BJ (cell line): ENCODE measurements at regions of chr2 and their contacts with region 1.

Region 1: DNA sequence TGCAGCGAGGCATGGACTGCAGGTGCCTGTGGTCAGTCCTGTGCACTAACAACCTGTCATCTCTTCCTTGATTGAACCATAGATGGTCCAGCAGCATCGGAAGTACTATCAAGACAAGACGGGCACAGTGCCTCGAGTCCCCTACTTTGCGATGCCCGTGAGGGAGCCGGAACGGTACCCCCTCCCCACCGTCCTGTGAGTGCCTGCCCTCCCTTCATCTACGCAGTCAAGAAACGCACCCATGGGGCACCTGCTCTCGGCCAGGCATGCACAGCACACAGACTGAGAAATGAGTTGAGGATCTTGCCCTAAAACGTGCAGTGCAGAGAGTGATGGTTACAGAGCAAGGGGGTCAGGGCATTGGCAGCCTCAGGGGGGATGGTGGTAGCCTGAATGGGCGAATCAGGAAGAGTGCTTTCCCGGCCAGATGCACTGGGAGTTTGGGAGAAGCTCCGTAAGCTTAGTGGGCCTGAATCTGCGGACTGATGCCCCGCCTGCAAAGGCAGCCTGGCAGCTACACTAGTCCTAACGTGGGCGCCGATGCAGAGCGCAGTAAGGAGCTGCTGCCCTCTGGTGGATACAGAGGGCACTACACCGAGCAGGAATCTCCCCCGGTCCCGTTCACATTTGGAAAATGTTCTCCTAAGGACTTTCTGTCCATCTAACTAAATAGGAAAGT is 63.6 kb downstream of the CIB4 start:
- DNase-seq: no peak
- H3K4me3 ChIP-seq: no peak overlapping the region
- H3K27me3 ChIP-seq: peaks cover 23% of the 10 kb centered on the region
- CTCF ChIP-seq: peak; percentile 98

Region 2: DNA sequence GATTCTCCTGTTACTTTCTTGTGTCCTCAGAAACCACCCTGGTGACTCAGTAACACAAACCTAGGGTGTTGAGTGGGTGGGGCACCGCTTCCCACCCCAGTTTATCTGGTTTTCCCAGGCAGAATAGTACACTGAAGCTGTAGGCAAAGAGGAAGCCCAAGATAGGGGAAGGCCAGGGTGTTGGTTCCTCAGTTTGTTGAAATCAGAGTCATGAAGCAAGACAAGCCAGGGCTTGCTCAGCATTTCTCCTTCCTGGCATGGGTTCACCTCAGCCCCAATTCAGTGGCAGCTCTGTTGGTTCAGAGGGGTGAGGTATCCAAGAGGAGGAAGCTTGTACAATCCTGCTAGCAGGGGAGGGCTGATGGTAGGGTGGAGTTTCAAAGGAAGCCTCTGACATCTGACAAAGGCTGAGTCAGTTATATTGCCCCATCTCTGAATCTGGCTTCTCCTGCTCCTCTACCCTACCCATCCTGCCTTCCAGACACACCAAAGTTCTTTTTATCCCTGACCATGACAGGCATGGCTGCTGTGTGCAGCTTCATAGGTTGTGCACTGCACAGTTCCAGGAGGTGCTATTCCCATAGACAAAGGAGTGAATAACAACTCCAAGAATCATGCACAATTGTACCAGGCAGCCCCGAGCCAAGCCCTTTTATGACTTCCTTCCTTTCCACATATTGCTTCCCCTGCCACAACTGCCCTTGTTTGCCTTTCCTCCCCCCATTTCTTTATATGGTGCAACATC is 568.6 kb before region 1 on chr2:
- CTCF ChIA-PET with region 1: no interaction called
- POLR2A ChIA-PET with region 1: no interaction called
- DNase-seq: no peak
- H3K4me3 ChIP-seq: no peak overlapping the region
- H3K27me3 ChIP-seq: no peaks in the 10 kb centered on the region
- CTCF ChIP-seq: no peak

Region 3: DNA sequence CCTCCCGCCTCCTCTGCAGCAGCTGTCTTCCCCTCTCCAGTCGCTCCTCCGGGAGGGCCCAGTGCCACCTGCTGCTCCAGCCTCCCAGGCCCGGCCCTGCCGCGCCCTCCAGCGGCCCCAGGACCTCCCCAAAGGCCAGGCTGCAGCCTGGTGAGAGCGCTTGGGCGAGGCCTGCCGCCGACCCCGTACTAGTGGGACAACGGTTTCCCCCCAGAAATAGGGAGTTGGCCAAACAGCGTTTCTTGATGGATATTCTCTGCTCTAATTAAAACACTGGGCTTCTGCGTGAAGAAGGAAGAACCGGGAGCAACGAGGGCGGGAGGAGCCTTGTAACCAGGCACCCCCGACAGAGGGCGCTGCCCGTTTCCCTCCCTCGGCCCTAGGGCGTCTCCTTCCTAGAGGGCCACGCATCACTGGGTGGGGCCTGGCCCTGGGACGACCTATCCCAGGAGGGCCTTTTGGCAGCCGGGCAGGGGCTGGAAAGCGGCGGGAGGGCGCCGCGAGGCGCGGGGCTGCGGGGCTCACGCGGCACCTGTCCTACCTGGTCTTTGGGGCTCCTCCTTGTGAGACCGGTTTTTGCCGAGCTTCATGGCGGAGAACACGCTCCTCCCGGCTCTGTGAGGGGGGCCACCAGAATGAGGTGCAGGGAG is 74.2 kb before region 1 on chr2:
- CTCF ChIA-PET with region 1: interaction called, 14 read pairs
- POLR2A ChIA-PET with region 1: no interaction called
- DNase-seq: no peak
- H3K4me3 ChIP-seq: peak overlapping the region; percentile 29
- H3K27me3 ChIP-seq: peaks cover 24% of the 10 kb centered on the region
- CTCF ChIP-seq: peak; percentile 90

Region 4: DNA sequence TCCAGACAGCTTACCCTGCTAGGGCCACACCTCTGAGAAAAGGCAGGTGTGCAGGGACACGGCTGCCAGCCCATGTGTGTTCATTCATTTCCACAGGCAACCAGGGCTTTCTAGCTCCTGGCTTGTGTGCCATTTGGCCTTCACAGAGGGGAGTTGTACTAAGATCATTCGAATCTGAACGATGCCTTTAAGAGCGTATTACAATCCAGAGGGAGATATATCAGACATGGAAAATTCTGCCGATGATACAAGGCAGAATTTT is 35.4 kb before region 1 on chr2:
- CTCF ChIA-PET with region 1: interaction called, 12 read pairs
- POLR2A ChIA-PET with region 1: no interaction called
- DNase-seq: no peak
- H3K4me3 ChIP-seq: no peak overlapping the region
- H3K27me3 ChIP-seq: peaks cover 11% of the 10 kb centered on the region
- CTCF ChIP-seq: no peak

Region 5: GRCh38 chr2:26555246-26556133 is 22.1 kb before region 1 on chr2:
- CTCF ChIA-PET with region 1: interaction called, 15 read pairs
- POLR2A ChIA-PET with region 1: no interaction called
- DNase-seq: no peak
- H3K4me3 ChIP-seq: no peak overlapping the region
- H3K27me3 ChIP-seq: peaks cover 37% of the 10 kb centered on the region
- CTCF ChIP-seq: no peak

Region 6: GRCh38 chr2:26591619-26592505 is 14.3 kb after region 1 on chr2:
- CTCF ChIA-PET with region 1: interaction called, 76 read pairs
- POLR2A ChIA-PET with region 1: no interaction called
- DNase-seq: no peak
- H3K4me3 ChIP-seq: no peak overlapping the region
- H3K27me3 ChIP-seq: peaks cover 29% of the 10 kb centered on the region
- CTCF ChIP-seq: no peak

Region 7: DNA sequence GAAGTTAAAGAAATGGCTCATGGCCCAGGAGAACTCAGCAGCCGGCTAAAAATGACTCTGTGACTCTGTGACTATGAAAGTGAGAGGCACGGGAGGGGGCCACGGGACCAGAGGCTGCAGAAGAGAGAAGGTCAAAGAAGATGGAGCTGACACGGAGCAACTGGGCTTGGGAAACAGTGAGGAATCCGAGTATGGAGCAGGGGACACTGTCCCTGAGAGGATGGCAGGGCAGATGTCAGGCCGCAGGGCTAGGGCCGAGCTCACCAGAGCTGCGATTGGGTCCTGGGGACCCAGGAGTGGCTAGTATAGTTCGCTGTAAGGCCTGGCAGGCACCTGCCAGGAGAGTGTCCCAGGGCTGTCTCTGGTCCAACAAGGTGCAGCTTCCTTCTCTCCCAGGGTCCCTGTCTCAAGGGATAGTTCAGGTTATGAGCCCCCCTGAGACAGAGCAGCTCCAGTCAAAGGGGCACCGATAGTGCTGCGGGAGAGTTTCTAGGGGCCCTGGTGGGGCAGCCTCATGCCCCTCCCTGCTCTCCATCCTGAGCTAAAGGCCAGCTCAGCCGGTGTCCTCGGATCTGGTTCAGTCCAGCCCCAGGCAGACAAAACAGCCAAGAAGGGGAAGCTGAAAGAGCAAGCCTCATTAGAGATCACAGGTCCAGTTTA is 20.9 kb after region 1 on chr2:
- CTCF ChIA-PET with region 1: interaction called, 76 read pairs
- POLR2A ChIA-PET with region 1: no interaction called
- DNase-seq: no peak
- H3K4me3 ChIP-seq: no peak overlapping the region
- H3K27me3 ChIP-seq: peaks cover 16% of the 10 kb centered on the region
- CTCF ChIP-seq: no peak